ENCODE measurements at regions of chr6 and their contacts with region 1.

Region 1: DNA sequence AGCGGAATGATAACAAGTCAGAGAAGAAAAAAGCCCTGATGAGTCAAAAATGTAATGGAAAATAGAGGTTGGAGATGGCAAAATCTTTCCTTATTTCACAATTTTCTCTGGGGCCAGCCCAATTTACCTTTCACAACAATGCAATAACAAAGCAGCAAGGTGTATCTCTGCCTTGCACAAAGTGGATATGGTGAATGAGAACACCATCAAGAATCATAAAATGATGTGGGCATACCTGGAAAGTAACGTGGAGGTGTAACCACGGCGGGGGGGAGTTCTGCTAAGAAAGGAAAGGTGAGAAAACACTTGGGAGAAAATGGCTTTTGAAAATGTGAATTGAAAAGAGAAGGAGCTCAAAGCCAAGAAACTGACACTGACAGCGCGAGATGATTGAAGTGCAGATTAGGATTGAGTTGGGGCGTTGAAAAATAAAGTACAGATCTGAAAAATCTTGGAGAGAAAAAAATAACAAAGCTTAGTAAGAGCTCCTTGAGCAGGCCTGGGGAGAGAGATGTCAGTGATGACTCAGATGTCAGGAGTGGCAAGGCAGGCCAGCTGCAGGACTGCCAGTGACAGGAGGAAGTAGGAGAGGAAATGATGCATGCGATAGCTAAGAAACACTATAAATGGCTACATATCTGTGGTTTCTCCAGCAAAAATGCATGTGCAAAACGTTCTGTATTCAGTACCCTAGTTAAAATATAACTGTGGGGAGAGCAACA is 26.2 kb downstream of the ARHGAP18 start:
- DNase-seq: peak; percentile 88
- H3K4me3 Mint-ChIP-seq: peak overlapping the region; percentile 68
- H3K27ac Mint-ChIP-seq: peak overlapping the region; percentile 84
- H3K4me1 Mint-ChIP-seq: peaks cover 54% of the 10 kb centered on the region
- H3K27me3 Mint-ChIP-seq: no peaks in the 10 kb centered on the region

Region 2: DNA sequence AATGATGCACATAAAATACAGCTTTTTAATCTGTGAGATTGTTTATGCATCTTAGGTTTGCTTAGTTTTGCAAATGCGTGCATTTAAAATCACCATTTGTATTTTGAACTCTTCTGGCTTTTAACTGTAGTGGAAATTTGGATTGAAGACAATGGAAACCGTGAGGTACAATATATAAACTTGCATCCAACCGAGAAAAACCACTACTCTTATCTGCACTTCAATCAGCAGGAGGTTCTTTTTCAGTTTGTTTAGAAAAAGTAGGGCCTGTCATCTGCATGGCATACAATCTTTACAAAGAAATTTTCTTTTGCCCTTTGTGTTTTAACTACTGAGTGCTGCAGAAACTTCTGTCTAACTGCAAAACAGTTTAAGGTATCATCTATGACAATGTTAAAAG is 668.0 kb before region 1 on chr6:
- intact Hi-C with region 1: no loop called
- DNase-seq: no peak
- H3K4me3 Mint-ChIP-seq: no peak overlapping the region
- H3K27ac Mint-ChIP-seq: no peak overlapping the region
- H3K4me1 Mint-ChIP-seq: no peaks in the 10 kb centered on the region
- H3K27me3 Mint-ChIP-seq: no peaks in the 10 kb centered on the region

Region 3: DNA sequence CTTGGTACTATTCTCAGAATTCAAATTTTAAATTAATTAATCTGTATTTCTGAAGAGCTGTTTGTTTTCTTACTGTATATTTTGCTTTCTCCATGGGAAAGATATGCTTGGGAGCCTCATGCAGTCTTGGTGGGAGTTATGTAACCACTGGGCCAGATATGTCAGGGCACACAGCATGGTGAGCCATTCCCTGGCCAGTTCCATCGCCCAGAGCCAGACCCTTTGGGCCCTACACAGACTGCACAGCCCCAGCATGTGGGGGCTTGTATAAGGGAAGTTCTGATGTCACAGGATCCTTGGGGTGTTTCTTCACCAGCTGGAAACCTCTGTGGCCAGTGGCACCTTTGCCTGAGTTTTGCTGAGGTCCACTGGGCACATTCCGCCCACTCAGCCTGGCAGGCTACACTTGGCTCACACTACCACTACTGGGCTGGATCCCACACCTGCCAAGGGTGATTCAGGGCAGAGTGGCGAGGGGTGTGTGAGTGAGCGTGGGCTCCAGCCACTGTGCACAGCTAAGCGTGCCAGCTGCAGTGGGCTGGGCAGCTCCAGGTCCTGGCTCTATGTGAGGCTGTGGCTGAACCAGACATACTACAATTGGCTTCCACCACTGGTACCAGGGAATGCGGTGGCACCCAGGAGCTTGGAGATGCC is 267.3 kb before region 1 on chr6:
- intact Hi-C with region 1: no loop called
- DNase-seq: no peak
- H3K4me3 Mint-ChIP-seq: no peak overlapping the region
- H3K27ac Mint-ChIP-seq: no peak overlapping the region
- H3K4me1 Mint-ChIP-seq: no peaks in the 10 kb centered on the region
- H3K27me3 Mint-ChIP-seq: peaks cover 3% of the 10 kb centered on the region

Region 4: GRCh38 chr6:129490521-129491245 is 193.1 kb before region 1 on chr6:
- intact Hi-C with region 1: loop called (anchors 1 kb)
- DNase-seq: peak; percentile 91
- H3K4me3 Mint-ChIP-seq: peak overlapping the region; percentile 84
- H3K27ac Mint-ChIP-seq: peak overlapping the region; percentile 98
- H3K4me1 Mint-ChIP-seq: peaks cover 61% of the 10 kb centered on the region
- H3K27me3 Mint-ChIP-seq: no peaks in the 10 kb centered on the region

Region 5: GRCh38 chr6:129665555-129665954 is 18.2 kb before region 1 on chr6:
- intact Hi-C with region 1: no loop called
- DNase-seq: no peak
- H3K4me3 Mint-ChIP-seq: no peak overlapping the region
- H3K27ac Mint-ChIP-seq: no peak overlapping the region
- H3K4me1 Mint-ChIP-seq: peaks cover 25% of the 10 kb centered on the region
- H3K27me3 Mint-ChIP-seq: no peaks in the 10 kb centered on the region

Region 6: GRCh38 chr6:129695373-129696027 is 11.7 kb after region 1 on chr6:
- intact Hi-C with region 1: loop called (anchors 1 kb)
- DNase-seq: peak; percentile 64
- H3K4me3 Mint-ChIP-seq: peak overlapping the region; percentile 59
- H3K27ac Mint-ChIP-seq: peak overlapping the region; percentile 21
- H3K4me1 Mint-ChIP-seq: peaks cover 57% of the 10 kb centered on the region
- H3K27me3 Mint-ChIP-seq: no peaks in the 10 kb centered on the region

Region 7: DNA sequence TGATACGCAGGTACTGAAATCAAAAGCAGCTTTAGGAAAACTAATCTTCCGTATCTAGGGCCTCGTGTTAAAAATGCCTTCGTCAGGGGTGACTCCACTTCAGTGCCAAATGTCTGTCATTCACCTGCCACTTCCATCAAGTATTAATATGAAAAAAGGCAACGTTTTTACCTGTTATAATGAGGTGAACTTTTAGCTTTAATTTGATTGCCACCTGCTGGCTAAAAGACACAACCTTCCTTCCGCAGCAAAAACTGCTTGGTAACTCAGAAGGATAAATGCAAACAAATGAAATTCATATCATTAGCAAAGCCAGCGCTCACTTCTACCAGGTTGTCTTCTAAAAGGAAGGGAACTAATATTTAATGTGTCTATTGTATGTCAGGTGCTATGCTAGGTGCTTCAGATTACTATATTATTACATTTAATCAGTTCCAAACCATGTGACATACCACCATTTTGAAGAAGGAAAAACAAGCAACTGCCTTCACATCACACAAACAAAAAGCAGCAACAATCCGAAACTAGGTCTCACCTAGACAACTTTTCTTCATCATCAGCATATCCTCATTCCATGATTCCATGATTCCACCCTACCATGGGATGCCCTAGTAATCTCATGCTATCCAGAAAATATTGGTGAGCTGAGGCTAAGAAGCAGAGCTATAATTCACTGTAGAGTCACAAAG is 46.9 kb after region 1 on chr6:
- intact Hi-C with region 1: loop called (anchors 5 kb)
- DNase-seq: peak; percentile 80
- H3K4me3 Mint-ChIP-seq: no peak overlapping the region
- H3K27ac Mint-ChIP-seq: no peak overlapping the region
- H3K4me1 Mint-ChIP-seq: peaks cover 12% of the 10 kb centered on the region
- H3K27me3 Mint-ChIP-seq: no peaks in the 10 kb centered on the region

Region 8: GRCh38 chr6:130215526-130215925 is 531.8 kb after region 1 on chr6:
- intact Hi-C with region 1: loop called (anchors 10 kb)
- DNase-seq: peak; percentile 86
- H3K4me3 Mint-ChIP-seq: peak overlapping the region; percentile 76
- H3K27ac Mint-ChIP-seq: peak overlapping the region; percentile 60
- H3K4me1 Mint-ChIP-seq: peaks cover 40% of the 10 kb centered on the region
- H3K27me3 Mint-ChIP-seq: no peaks in the 10 kb centered on the region

Measured in activated CD4-positive, alpha-beta T cell treated with anti-CD3 and anti-CD28 coated beads, Interleukin-2, amount 10 ng/mL, durations not matched to agents 24 days and 14 days (primary cell).